Ascending aorta (tissue), 2 donors: ENCODE measurements at regions of chr1 and their contacts with region 1.

Region 1: GRCh38 chr1:16960560-16961296 is 19.7 kb downstream of the MFAP2 start:
- DNase-seq: peak in 1 of 2 donors; percentile 90
- H3K4me3 ChIP-seq: peak overlapping the region; percentile 50 to 58
- H3K27ac ChIP-seq: peak overlapping the region; percentile 13 to 37
- H3K4me1 ChIP-seq: peaks cover 7% of the 10 kb centered on the region in 2 donors
- H3K27me3 ChIP-seq: no peaks in the 10 kb centered on the region
- CTCF ChIP-seq: peak; percentile 71 to 78 (median 75)

Region 2: DNA sequence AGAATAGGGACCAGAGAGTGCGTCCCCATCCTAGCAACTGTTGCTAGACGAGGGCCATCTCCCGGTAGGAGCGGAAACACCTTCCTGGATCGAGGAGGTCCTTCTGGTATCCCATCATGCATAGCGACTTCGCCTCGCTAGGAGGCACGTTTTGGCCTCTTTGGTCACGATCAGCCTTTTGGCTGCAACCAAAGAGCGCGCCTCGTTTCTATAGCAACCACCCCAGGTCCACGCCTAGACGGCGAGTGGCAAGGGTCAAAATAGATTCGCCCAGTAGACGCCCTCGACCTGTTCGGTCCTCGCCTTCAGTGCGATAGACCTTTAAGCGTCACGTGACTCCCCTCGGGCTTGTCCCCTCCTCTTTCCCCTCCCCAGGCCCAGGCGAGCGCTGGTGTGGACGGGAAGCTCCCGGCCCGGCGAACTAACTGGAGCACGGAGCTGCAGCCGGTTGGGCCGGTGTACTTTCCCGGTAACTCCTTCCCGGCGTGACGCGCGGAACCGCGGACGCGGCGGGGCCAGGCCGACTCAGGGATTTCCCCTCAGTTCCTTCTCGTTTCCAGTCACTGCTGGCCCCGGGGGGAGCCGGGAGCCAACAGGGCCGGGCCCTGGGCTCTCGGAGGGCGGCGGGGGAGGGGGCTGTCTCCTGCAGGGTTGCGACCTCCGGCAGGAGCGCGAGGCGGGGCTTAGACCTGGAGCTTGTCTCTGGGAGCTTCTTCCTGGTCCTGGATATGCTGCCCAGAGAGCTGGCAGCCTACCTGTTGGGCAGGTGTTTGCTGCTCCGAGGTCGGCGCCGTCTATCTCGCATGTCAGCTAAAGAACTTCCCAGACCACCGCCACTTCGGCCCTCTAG is 1434.0 kb before region 1 on chr1 and contains the start of gene DNAJC16:
- intact Hi-C with region 1: loop called (anchors 5 kb)
- DNase-seq: peak; percentile 98 to 100
- H3K4me3 ChIP-seq: peak within 1 kb of the TSS; percentile 94 to 98
- H3K27ac ChIP-seq: peak within 1 kb of the TSS; percentile 93 to 94
- H3K4me1 ChIP-seq: peaks cover 7 to 25% of the 10 kb centered on the region in 2 donors
- H3K27me3 ChIP-seq: no peaks in the 10 kb centered on the region
- CTCF ChIP-seq: peak in 2 of 3 experiments; percentile 19 to 29
- total RNA-seq, gene DNAJC16: 11.4 TPM

Region 3: GRCh38 chr1:16978567-16979474 is 18.1 kb after region 1 on chr1:
- intact Hi-C with region 1: loop called (anchors 2 kb)
- DNase-seq: peak; percentile 71 to 89
- H3K4me3 ChIP-seq: peak overlapping the region; percentile 62 to 88
- H3K27ac ChIP-seq: peak overlapping the region; percentile 93 to 95
- H3K4me1 ChIP-seq: peaks cover 0 to 20% of the 10 kb centered on the region in 2 donors
- H3K27me3 ChIP-seq: no peaks in the 10 kb centered on the region
- CTCF ChIP-seq: no peak

Region 4: DNA sequence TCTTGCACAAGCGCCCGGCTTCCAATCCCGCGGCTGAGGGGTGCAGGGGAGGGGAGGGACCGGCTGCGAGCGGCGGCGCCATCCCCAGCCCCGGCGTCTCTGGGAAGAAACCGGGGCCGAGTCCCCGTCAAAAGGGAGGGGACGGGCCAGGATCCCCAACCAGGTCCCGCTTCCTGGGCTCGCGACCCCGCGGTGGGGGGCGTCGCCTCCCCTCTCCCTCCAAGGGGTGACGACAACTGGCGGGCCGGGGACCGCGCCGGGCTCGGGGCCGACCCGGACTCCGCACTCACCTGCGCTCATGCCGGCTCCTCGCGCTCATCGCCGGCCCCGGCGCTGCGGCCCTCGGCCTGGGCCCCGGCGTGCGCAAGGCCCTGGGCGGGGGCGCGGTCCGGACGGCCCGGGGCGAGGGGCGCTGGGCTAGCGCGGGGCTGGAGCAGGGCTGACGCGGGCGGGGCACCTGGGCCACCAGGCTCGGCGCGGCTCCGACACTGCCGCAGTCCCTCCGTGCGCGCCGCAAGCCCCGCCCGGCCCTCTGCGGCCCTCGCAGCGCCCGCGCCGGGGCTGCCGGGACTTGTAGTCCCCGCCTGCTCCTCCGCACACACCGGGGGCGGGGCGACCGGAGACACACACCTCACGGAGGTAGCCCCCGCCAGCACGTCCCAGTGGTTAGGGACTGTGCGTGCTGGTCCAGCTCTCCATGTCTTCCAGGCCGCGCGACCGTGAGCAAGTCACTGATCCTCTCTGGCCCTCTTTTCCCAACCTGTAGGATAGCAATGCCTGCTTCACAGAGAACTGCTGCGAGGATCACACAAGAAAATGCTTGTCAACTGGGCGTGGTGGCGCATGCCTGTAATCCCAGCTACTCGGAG is 50.9 kb after region 1 on chr1 and contains the start of gene ATP13A2:
- intact Hi-C with region 1: loop called (anchors 1 kb)
- DNase-seq: peak; percentile 33 to 87
- H3K4me3 ChIP-seq: peak within 1 kb of the TSS; percentile 84 to 90
- H3K27ac ChIP-seq: no peak within 1 kb of the TSS
- H3K4me1 ChIP-seq: peaks cover 13 to 14% of the 10 kb centered on the region in 2 donors
- H3K27me3 ChIP-seq: no peaks in the 10 kb centered on the region
- CTCF ChIP-seq: no peak
- total RNA-seq, gene ATP13A2: 39.2 TPM

Region 5: GRCh38 chr1:17045634-17046333 is 85.1 kb after region 1 on chr1:
- intact Hi-C with region 1: loop called (anchors 1 kb)
- DNase-seq: no peak
- H3K4me3 ChIP-seq: peak overlapping the region; percentile 6 to 40
- H3K27ac ChIP-seq: peak overlapping the region in 1 of 2 donors; percentile 5
- H3K4me1 ChIP-seq: peaks cover 0 to 5% of the 10 kb centered on the region in 2 donors
- H3K27me3 ChIP-seq: no peaks in the 10 kb centered on the region
- CTCF ChIP-seq: peak; percentile 71 to 82 (median 81)

Region 6: GRCh38 chr1:17125756-17126237 is 165.1 kb after region 1 on chr1:
- intact Hi-C with region 1: loop called (anchors 10 kb)
- DNase-seq: peak; percentile 36 to 90
- H3K4me3 ChIP-seq: no peak overlapping the region
- H3K27ac ChIP-seq: no peak overlapping the region
- H3K4me1 ChIP-seq: peaks cover 0 to 23% of the 10 kb centered on the region in 2 donors
- H3K27me3 ChIP-seq: no peaks in the 10 kb centered on the region
- CTCF ChIP-seq: peak; percentile 92 to 94 (median 93)

Region 7: DNA sequence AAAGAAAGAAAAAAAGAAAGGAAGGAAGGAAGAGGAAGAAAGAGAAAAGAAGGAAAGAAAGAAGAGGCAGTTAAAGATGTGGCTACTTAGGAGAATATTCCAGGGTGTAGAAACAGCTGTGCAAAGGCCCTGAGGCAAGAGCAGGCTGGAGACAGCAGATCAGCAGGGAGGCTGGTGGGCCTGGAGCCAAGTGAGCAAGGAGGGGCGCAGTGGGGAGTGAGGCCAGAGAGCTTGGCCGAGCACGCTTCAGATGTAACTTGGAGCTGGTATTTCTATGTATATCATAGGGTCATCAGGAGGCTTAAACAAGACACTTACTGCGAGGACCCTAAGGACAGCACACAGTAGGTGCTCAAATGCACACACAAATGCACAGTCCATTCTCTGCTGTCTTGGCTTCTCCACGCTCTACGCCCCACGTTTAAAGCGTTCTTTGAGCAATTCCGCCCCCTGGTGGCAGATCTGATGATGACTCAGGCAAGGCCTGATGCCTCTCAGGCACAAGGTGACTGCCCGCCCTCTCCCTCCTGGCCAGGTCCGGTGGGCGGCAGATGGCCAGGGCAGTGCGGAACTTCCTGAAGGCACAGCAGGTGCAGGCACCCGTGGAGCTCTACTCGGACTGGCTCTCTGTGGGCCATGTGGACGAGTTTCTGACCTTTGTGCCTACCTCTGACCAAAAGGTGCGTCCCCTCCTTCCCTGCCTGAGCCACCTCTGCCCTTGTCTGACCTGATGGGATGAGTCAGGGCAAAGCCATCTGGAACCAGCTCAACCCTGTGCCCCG is 276.2 kb after region 1 on chr1:
- intact Hi-C with region 1: loop called (anchors 5 kb)
- DNase-seq: peak; percentile 11 to 90
- H3K4me3 ChIP-seq: no peak overlapping the region
- H3K27ac ChIP-seq: no peak overlapping the region
- H3K4me1 ChIP-seq: peaks cover 0 to 4% of the 10 kb centered on the region in 2 donors
- H3K27me3 ChIP-seq: no peaks in the 10 kb centered on the region
- CTCF ChIP-seq: peak; percentile 81 to 89 (median 88)